ENCODE measurements at regions of chr16 and their contacts with region 1.

Region 1: DNA sequence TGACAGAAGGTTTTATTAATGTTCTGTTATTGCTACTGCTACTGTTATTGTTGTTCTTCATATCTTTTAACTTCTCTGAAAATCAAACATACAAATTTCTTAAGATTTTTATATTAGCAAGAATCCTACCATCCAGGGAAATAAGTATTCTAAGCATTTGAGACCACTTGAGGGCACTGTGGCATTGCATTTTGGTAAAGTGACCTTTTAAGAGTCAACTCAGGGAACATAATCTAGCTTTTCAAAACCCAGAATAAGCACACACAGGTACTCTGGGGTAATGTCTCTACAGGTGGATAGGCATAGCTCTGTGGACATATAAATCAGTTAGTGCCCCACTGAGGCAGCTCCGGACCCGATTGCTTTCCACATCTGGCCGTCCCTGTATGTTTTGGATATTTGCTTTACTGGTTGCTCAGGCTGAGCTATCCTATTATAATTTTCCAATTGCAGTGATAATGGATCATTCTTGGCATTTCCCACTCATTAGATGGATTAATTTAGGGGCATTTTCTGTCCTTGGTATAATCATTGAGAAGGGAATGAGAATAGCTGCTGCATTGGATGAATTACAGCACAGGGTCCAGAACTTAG is 1425.1 kb upstream of the CDH8 start:
- DNase-seq: peak in 1 of 2 experiments; percentile 50
- H3K4me3 ChIP-seq: no peak overlapping the region
- H3K27ac ChIP-seq: no peak overlapping the region
- H3K4me1 ChIP-seq: peaks cover 0 to 3% (median 0%) of the 10 kb centered on the region in 4 experiments; a peak in 1 of 7 replicates
- H3K27me3 ChIP-seq: no peaks in the 10 kb centered on the region
- CTCF ChIP-seq: peak in 2 of 3 experiments; percentile 46 to 52; a peak in 2 of 4 replicates
- EP300 ChIP-seq: no peak
- POLR2A ChIP-seq: no peak
- RAD21 ChIP-seq: peak; percentile 88 to 89

Region 2: GRCh38 chr16:63426275-63426870 is 35.0 kb before region 1 on chr16:
- CTCF ChIA-PET with region 1: no interaction called
- POLR2A ChIA-PET with region 1: no interaction called
- DNase-seq: no peak
- H3K4me3 ChIP-seq: no peak overlapping the region
- H3K27ac ChIP-seq: no peak overlapping the region
- H3K4me1 ChIP-seq: no peaks in the 10 kb centered on the region
- H3K27me3 ChIP-seq: no peaks in the 10 kb centered on the region
- CTCF ChIP-seq: no peak
- EP300 ChIP-seq: no peak
- POLR2A ChIP-seq: no peak
- RAD21 ChIP-seq: no peak

Region 3: GRCh38 chr16:64051824-64052223 is 590.5 kb after region 1 on chr16:
- CTCF ChIA-PET with region 1: interaction called, 68 read pairs
- POLR2A ChIA-PET with region 1: no interaction called
- DNase-seq: no peak
- H3K4me3 ChIP-seq: no peak overlapping the region
- H3K27ac ChIP-seq: no peak overlapping the region
- H3K4me1 ChIP-seq: no peaks in the 10 kb centered on the region
- H3K27me3 ChIP-seq: no peaks in the 10 kb centered on the region
- CTCF ChIP-seq: peak in 2 of 3 experiments; percentile 37 to 40; a peak in 2 of 4 replicates
- EP300 ChIP-seq: no peak
- POLR2A ChIP-seq: no peak
- RAD21 ChIP-seq: peak; percentile 85 to 87

Measured in H1 (cell line).